Dorsolateral prefrontal cortex (tissue), 120 donors: ENCODE measurements at regions of chr5 and their contacts with region 1.

Region 1: GRCh38 chr5:133891390-133891789 is 77.0 kb downstream of the C5orf15 start:
- DNase-seq: peak in 8 of 10 donors; percentile 31 to 73 (median 64)
- H3K4me3 ChIP-seq: no peak overlapping the region
- H3K27ac ChIP-seq: peak overlapping the region in 7 of 59 donors; percentile 8 to 64 (median 35)
- H3K27me3 ChIP-seq: no peaks in the 10 kb centered on the region
- CTCF ChIP-seq: no peak

Region 2: GRCh38 chr5:133831491-133832224 is 59.7 kb before region 1 on chr5:
- intact Hi-C with region 1: no loop called
- DNase-seq: no peak
- H3K4me3 ChIP-seq: no peak overlapping the region
- H3K27ac ChIP-seq: no peak overlapping the region
- H3K27me3 ChIP-seq: peaks cover 0 to 3% (median 0%) of the 10 kb centered on the region in 45 donors
- CTCF ChIP-seq: no peak

Region 3: DNA sequence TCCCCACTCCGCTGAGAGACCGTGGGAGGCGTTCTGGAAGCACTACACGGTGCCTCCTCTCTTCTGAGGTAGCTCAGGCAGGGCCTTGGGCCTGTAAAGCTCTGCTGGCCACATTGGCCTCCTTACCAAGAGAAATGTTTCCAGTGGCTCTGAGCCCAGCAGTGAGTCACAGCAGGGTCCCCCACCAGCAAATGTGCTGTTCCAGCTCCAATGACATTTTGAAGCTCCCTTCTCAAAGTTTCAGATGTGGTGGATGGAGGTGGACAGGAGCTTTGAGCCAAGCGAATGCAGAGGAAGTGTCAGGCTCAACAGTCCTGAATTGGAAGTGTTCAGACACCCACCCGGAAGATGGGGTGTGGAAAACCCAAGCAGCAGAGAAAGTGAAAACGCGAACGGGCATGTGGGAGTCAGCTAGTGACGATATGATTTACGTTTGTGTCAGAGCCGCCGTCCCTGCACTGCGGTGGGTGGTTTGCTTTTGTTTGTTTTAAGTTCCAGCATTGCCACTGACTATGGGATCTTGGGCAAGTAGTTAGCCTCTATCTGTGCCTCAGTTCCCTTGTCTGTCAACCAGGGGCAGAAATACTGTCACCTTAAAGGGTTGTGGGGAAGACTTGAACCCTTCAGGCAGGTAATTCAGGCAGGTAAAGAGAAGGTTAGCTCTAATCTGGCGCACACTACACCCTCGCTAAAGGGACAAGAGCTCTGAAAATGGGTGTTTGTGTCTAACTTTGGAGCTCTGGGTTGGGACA is 38.8 kb after region 1 on chr5:
- intact Hi-C with region 1: loop called in 1 of 2 experiments (anchors 1 kb)
- DNase-seq: peak in 8 of 10 donors; percentile 38 to 86 (median 72)
- H3K4me3 ChIP-seq: peak overlapping the region in 1 of 59 donors; percentile 6
- H3K27ac ChIP-seq: peak overlapping the region in 43 of 59 donors; percentile 3 to 81 (median 46)
- H3K27me3 ChIP-seq: no peaks in the 10 kb centered on the region
- CTCF ChIP-seq: no peak

Region 4: GRCh38 chr5:133952729-133953567 is 61.6 kb after region 1 on chr5:
- intact Hi-C with region 1: no loop called
- DNase-seq: peak in 3 of 10 donors; percentile 14 to 61 (median 42)
- H3K4me3 ChIP-seq: no peak overlapping the region
- H3K27ac ChIP-seq: peak overlapping the region in 57 of 59 donors; percentile 11 to 87 (median 67)
- H3K27me3 ChIP-seq: no peaks in the 10 kb centered on the region
- CTCF ChIP-seq: no peak